GM23248 (cell line): ENCODE measurements at regions of chr14 and their contacts with region 1.

Region 1: DNA sequence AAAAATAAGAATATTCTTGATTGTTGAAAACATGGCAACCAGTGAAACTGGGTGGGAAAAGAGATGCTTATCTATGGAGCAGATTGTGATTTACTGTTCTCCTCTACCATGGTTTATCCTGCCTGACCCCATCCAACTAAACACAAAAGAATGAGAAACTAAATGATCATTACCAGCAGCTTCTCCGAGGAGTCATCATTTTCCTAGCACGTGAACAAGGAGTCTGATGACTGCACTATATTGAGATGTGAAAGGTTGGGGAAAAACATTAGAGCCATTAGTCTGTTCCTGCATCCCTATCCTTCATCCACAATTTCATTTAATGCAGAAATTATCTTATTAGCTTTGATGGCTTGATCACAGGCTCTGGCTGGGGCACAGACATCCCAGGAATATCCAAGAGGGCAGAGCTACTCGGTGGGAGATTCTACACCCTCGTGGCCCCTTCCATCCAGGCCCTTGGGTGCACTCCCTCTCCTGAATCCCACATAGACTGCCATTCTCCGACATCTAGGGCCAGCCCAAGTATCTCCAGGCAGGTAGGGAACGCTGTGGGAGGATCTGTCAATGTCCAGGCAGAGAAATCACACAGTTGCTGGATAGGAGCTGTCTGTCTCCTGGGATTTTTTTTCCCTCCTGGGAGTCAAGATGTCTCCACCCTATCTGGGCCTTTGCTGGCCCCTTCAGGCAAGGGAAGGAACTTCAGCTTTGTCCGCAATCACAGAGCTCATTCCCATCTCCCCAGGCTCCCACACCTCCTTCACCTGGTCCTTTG is 43.3 kb upstream of the DHRS4 start:
- DNase-seq: peak; percentile 78
- H3K4me3 ChIP-seq: no peak overlapping the region
- H3K27ac ChIP-seq: peak overlapping the region; percentile 30
- H3K4me1 ChIP-seq: peaks cover 9% of the 10 kb centered on the region; the same call in 1 of the 2 replicates
- H3K27me3 ChIP-seq: peaks cover 17% of the 10 kb centered on the region

Region 2: GRCh38 chr14:23727566-23728335 is 182.5 kb before region 1 on chr14:
- in situ Hi-C with region 1: loop called (anchors 10 kb)
- DNase-seq: peak; percentile 75
- H3K4me3 ChIP-seq: no peak overlapping the region
- H3K27ac ChIP-seq: no peak overlapping the region
- H3K4me1 ChIP-seq: no peaks in the 10 kb centered on the region
- H3K27me3 ChIP-seq: no peaks in the 10 kb centered on the region; the same call in 1 of the 2 replicates

Region 3: GRCh38 chr14:24093901-24094761 is 183.8 kb after region 1 on chr14 and contains the start of gene PCK2:
- in situ Hi-C with region 1: no loop called
- DNase-seq: peak; percentile 96
- H3K4me3 ChIP-seq: peak within 1 kb of the TSS; percentile 94
- H3K27ac ChIP-seq: peak within 1 kb of the TSS; percentile 70
- H3K4me1 ChIP-seq: peaks cover 10% of the 10 kb centered on the region
- H3K27me3 ChIP-seq: no peaks in the 10 kb centered on the region
- total RNA-seq, gene PCK2: 70.3 and 84.3 TPM in 2 replicates